Endothelial cell of umbilical vein (primary cell): ENCODE measurements at regions of chr4 and their contacts with region 1.

Region 1: DNA sequence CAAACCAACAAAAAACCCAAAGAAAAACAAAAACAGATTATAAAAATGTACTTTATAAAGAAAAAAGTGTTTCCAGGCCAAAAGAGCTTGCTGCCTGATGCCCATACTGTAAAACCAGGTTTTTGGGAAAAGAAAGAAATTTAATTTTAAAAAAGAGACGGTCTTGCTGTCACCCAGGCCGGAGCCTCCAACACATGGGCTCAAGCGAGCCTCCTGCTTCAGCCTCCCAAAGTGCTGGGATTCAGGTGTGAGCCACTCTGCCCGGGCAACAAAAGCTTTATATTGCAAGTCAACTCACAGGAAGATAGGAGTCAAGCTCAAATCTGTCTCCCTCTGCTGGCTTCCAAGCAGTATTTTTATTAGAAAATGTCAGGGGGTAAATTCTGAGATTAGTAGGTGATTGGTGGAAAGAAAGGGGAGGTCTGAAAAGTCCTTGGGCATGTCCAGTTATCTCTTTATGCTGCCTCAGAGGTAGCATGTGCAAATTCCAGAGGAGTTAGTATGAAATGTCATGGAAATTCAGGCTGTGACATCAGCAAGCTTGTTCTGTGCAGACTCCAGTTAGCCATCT is 39.4 kb downstream of the MGST2 start:
- DNase-seq: peak; percentile 15
- H3K4me3 ChIP-seq: no peak overlapping the region
- H3K27ac ChIP-seq: no peak overlapping the region
- H3K4me1 ChIP-seq: no peaks in the 10 kb centered on the region
- H3K27me3 ChIP-seq: no peaks in the 10 kb centered on the region
- CTCF ChIP-seq: peak; percentile 19 to 38
- POLR2A ChIP-seq: no peak

Region 2: GRCh38 chr4:139665690-139666529 is 39.1 kb before region 1 on chr4 and contains the start of gene MGST2:
- CTCF ChIA-PET with region 1: interaction called, 10 read pairs
- POLR2A ChIA-PET with region 1: no interaction called
- dilution Hi-C with region 1: no loop called
- intact Hi-C with region 1: no loop called
- DNase-seq: peak; percentile 95
- H3K4me3 ChIP-seq: peak within 1 kb of the TSS; percentile 5 to 60 (median 56)
- H3K27ac ChIP-seq: peak within 1 kb of the TSS; percentile 77
- H3K4me1 ChIP-seq: peaks cover 29% of the 10 kb centered on the region
- H3K27me3 ChIP-seq: no peaks in the 10 kb centered on the region
- CTCF ChIP-seq: peak in 1 of 2 donors; percentile 0
- POLR2A ChIP-seq: peak; percentile 74
- total RNA-seq, gene MGST2: 62.4 and 64.3 TPM in 2 replicates

Region 3: DNA sequence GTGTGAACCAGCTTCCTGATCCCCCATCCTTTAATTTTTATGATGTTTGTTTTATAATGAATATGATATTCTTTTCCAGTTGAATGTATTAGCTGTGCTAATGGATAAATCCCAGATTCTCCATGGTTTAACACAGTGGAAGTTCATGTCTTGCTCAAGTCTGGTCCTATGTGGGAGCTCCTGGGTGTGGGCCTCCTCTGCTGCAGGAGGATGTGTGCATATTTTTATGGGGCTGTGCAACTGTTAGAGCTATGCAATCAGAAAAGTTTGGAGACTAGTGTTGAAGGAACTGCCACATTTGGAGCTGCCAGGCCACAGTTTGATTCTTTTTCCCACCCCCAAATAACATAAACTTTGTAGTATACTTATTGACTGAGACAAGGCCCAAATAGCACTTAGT is 14.6 kb before region 1 on chr4:
- CTCF ChIA-PET with region 1: interaction called, 10 read pairs
- POLR2A ChIA-PET with region 1: no interaction called
- dilution Hi-C with region 1: no loop called
- intact Hi-C with region 1: no loop called
- DNase-seq: no peak
- H3K4me3 ChIP-seq: no peak overlapping the region
- H3K27ac ChIP-seq: no peak overlapping the region
- H3K4me1 ChIP-seq: no peaks in the 10 kb centered on the region
- H3K27me3 ChIP-seq: no peaks in the 10 kb centered on the region
- CTCF ChIP-seq: no peak
- POLR2A ChIP-seq: no peak

Region 4: GRCh38 chr4:139761461-139761860 is 56.5 kb after region 1 on chr4:
- CTCF ChIA-PET with region 1: no interaction called
- POLR2A ChIA-PET with region 1: no interaction called
- dilution Hi-C with region 1: no loop called
- intact Hi-C with region 1: no loop called
- DNase-seq: no peak
- H3K4me3 ChIP-seq: no peak overlapping the region
- H3K27ac ChIP-seq: no peak overlapping the region
- H3K4me1 ChIP-seq: peaks cover 41% of the 10 kb centered on the region
- H3K27me3 ChIP-seq: no peaks in the 10 kb centered on the region
- CTCF ChIP-seq: peak; percentile 19 to 25
- POLR2A ChIP-seq: no peak

Region 5: DNA sequence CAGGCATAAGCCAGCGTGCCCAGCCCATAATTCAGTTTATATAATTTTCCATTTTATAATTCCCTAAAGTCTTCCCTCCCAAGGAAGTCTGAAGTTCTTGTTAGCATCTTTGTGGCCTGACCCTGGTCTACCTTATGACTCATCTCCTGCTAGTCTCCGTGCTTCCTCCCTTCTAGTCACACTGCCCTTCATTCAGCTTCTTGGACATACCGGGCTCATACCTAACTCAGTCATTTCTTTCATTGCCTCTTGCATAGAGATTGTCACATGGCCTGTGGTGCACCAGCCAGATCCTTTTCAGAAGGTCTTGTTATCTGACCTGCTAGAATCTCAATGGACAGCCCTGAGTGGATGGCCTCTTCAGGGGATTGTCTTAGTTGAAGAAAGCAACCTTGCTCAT is 471.7 kb after region 1 on chr4:
- CTCF ChIA-PET with region 1: no interaction called
- POLR2A ChIA-PET with region 1: no interaction called
- dilution Hi-C with region 1: no loop called
- intact Hi-C with region 1: no loop called
- DNase-seq: peak; percentile 15
- H3K4me3 ChIP-seq: no peak overlapping the region
- H3K27ac ChIP-seq: no peak overlapping the region
- H3K4me1 ChIP-seq: peaks cover 5% of the 10 kb centered on the region
- H3K27me3 ChIP-seq: no peaks in the 10 kb centered on the region
- CTCF ChIP-seq: no peak
- POLR2A ChIP-seq: no peak